ENCODE measurements at regions of chr12 and their contacts with region 1.

Region 1: DNA sequence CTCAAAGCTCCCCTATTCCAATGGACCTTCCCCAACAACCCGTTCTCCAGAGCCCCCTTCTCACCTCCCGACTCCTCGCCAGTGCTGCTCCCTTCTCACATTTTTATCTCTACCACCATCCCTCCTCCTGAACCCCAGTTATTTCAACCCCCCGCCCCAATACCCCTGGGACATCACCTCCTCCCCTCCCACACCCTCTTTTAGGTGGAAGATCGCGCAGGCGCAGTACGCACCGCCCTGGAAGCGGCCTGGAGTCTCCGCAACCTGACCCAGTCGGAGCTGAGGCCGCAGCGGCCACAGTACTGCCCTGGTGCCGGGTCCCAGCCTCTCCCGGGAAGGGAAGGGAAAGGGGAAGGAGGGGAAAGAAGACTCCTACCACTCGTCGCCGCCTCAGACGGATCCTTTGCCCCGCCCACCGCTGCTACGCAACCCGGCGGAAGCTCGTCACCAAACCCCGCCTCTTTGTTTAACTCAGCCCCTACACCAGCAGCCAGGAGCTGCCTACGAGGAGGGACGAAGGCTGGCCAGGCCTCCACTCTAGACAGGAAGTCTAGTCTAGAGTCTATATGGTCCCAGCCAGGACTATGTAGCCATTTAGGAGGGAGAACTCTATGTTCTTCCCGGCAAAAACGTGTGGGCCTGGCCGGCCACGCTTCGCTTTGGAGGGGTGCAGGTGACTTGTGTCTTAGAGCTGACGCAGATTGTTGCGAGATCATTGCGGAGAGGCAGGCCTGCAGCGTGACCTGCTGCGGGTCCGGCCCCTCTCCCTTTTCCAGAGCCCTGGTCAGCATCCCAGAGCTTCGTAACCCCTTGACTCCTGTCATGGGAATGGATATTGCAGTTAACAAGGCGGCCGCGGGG is at the start of gene RNF41:
- DNase-seq: peak; percentile 95
- H3K4me3 Mint-ChIP-seq: peak within 1 kb of the TSS; percentile 99
- H3K27ac Mint-ChIP-seq: peak within 1 kb of the TSS; percentile 93
- H3K4me1 Mint-ChIP-seq: peaks cover 53% of the 10 kb centered on the region
- H3K27me3 Mint-ChIP-seq: no peaks in the 10 kb centered on the region

Region 2: GRCh38 chr12:56127888-56128669 is 93.7 kb before region 1 on chr12 and contains the start of gene ESYT1:
- CTCF ChIA-PET with region 1: interaction called, 13 read pairs
- DNase-seq: peak; percentile 99
- H3K4me3 Mint-ChIP-seq: peak within 1 kb of the TSS; percentile 97
- H3K27ac Mint-ChIP-seq: peak within 1 kb of the TSS; percentile 94
- H3K4me1 Mint-ChIP-seq: peaks cover 78% of the 10 kb centered on the region
- H3K27me3 Mint-ChIP-seq: peaks cover 3% of the 10 kb centered on the region

Region 3: DNA sequence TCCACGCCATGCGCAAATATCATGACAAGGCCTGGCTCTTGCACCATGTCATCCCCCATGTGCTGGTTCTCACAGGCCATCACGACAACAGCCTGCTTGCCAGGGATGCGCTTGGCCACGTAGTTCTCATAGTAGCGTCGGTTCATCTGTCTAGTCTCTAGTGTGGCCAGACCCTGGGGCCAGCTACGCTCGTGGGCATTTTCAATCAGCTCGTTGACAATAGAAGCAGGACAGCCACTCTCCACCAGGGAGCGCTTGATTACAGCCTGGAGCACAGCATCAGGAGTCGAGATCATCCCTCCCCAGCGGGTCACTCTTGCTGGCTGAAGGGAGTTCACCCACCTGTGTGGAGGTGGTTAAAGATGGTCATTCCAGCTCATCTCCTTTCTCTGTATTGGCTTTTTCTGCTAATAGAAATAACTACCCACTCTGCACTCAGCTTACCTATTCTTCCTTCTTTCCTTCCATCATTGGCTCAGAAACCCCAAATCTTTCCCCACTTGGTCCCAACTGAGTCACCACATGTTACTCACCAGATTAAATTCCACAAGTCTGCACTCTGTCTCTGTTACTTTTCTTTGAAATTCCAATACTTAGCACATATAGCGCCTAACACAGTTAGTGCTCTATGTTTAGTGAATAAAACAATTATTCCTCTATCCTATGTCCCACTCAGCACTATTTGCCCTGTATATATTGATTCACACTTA is 15.1 kb before region 1 on chr12:
- CTCF ChIA-PET with region 1: interaction called, 34 read pairs
- DNase-seq: peak; percentile 65
- H3K4me3 Mint-ChIP-seq: no peak overlapping the region
- H3K27ac Mint-ChIP-seq: no peak overlapping the region
- H3K4me1 Mint-ChIP-seq: no peaks in the 10 kb centered on the region
- H3K27me3 Mint-ChIP-seq: no peaks in the 10 kb centered on the region

Region 4: DNA sequence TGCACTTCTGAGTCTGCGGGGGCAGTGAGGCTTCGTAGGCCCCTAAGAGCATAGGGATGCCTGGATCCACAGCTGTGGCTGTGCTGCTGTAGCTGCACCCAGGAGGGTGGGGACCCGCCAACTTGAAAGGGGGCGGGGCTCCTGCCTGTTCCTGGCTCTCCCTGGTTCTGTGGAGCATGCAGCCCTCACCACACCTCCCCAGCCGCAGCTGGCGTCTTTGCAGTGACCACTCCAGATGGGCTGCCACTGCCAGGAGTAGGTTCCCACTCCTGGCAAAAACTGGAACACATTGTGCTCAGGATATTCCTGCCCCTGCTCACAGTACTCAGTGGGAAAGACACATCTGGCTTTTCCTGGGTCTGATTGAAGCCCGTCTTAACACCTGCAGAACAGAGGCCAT is 191.6 kb after region 1 on chr12:
- CTCF ChIA-PET with region 1: no interaction called
- DNase-seq: no peak
- H3K4me3 Mint-ChIP-seq: no peak overlapping the region
- H3K27ac Mint-ChIP-seq: no peak overlapping the region
- H3K4me1 Mint-ChIP-seq: no peaks in the 10 kb centered on the region
- H3K27me3 Mint-ChIP-seq: no peaks in the 10 kb centered on the region